Natural killer cell (primary cell): ENCODE measurements at regions of chr20 and their contacts with region 1.

Region 1: GRCh38 chr20:44217342-44218092 is 6.9 kb upstream of the OSER1 start:
- DNase-seq: peak; percentile 53 to 90
- ATAC-seq: peak; percentile 65 to 73 (median 70)
- H3K4me3 ChIP-seq: peak overlapping the region; percentile 2
- H3K4me3 Mint-ChIP-seq: peak overlapping the region; percentile 92
- H3K27ac ChIP-seq: peak overlapping the region; percentile 52
- H3K27ac Mint-ChIP-seq: peak overlapping the region; percentile 37 to 68
- H3K4me1 ChIP-seq: peaks cover 31% of the 10 kb centered on the region
- H3K4me1 Mint-ChIP-seq: peaks cover 49 to 54% of the 10 kb centered on the region in 2 donors
- H3K27me3 ChIP-seq: no peaks in the 10 kb centered on the region
- H3K27me3 Mint-ChIP-seq: no peaks in the 10 kb centered on the region
- CTCF ChIP-seq: peak; percentile 98

Region 2: GRCh38 chr20:44310664-44311639 is 93.4 kb after region 1 on chr20 and contains the start of gene FITM2:
- intact Hi-C with region 1: loop called (anchors 1 kb)
- DNase-seq: peak; percentile 98 to 99
- ATAC-seq: peak; percentile 95 to 97 (median 95)
- H3K4me3 ChIP-seq: peak within 1 kb of the TSS; percentile 96
- H3K4me3 Mint-ChIP-seq: peak within 1 kb of the TSS; percentile 97
- H3K27ac ChIP-seq: peak within 1 kb of the TSS; percentile 34
- H3K27ac Mint-ChIP-seq: peak within 1 kb of the TSS; percentile 86 to 95
- H3K4me1 ChIP-seq: peaks cover 18% of the 10 kb centered on the region
- H3K4me1 Mint-ChIP-seq: peaks cover 24 to 28% of the 10 kb centered on the region in 2 donors
- H3K27me3 ChIP-seq: no peaks in the 10 kb centered on the region
- H3K27me3 Mint-ChIP-seq: no peaks in the 10 kb centered on the region
- CTCF ChIP-seq: peak; percentile 90
- total RNA-seq, gene FITM2: 3.7 to 6.0 (median 3.9) TPM

Region 3: DNA sequence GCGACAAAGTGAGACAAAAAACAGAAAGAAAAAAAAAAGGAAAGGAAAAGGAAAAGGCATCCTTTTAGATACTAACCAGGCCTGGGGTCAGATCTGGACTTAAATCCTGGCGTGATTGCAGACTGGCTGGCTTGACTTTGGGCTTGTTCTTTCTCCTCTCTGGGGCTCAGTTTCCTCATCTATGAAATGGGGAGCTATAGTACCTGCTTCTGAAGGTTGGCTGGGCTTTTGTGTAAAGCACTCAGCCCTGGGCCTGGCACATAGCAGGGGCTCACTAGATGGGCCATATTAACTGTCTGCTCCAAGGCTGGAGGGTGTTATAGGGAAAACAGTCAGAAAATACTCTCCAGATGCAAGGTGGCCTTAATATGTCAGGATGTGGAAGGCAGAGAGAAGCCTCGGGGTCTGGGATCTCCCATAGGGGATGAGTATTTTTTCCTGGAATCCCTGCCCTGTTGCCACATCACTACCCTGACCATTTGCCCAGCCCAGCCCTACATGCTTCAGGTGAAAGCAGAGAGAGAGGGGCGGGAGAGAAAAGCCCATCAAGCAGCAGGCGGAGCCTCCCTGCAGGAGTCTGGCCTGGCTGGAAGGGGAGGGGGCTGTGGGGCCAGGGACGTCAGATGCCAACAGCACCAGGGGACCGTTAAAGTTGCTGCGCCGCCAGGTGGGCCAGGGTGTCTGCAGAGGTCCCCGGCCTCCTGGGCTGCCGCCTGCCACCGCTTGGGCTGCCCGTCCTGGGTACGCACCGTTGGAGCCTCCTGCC is 118.3 kb after region 1 on chr20:
- intact Hi-C with region 1: no loop called
- DNase-seq: no peak
- ATAC-seq: no peak
- H3K4me3 ChIP-seq: no peak overlapping the region
- H3K4me3 Mint-ChIP-seq: no peak overlapping the region
- H3K27ac ChIP-seq: no peak overlapping the region
- H3K27ac Mint-ChIP-seq: no peak overlapping the region
- H3K4me1 ChIP-seq: no peaks in the 10 kb centered on the region
- H3K4me1 Mint-ChIP-seq: no peaks in the 10 kb centered on the region
- H3K27me3 ChIP-seq: no peaks in the 10 kb centered on the region
- H3K27me3 Mint-ChIP-seq: peaks cover 13 to 17% of the 10 kb centered on the region in 2 donors
- CTCF ChIP-seq: no peak

Region 4: GRCh38 chr20:44388466-44389023 is 171.0 kb after region 1 on chr20:
- intact Hi-C with region 1: loop called (anchors 5 kb)
- DNase-seq: peak; percentile 61 to 79
- ATAC-seq: peak; percentile 73 to 90 (median 86)
- H3K4me3 ChIP-seq: no peak overlapping the region
- H3K4me3 Mint-ChIP-seq: no peak overlapping the region
- H3K27ac ChIP-seq: no peak overlapping the region
- H3K27ac Mint-ChIP-seq: no peak overlapping the region
- H3K4me1 ChIP-seq: peaks cover 6% of the 10 kb centered on the region
- H3K4me1 Mint-ChIP-seq: peaks cover 11 to 24% of the 10 kb centered on the region in 2 donors
- H3K27me3 ChIP-seq: peaks cover 3% of the 10 kb centered on the region
- H3K27me3 Mint-ChIP-seq: peaks cover 7 to 10% of the 10 kb centered on the region in 2 donors
- CTCF ChIP-seq: peak; percentile 72

Region 5: GRCh38 chr20:44738813-44739477 is 521.4 kb after region 1 on chr20:
- intact Hi-C with region 1: loop called (anchors 5 kb)
- DNase-seq: peak in 1 of 2 donors; percentile 74
- ATAC-seq: peak in 2 of 3 donors; percentile 63
- H3K4me3 ChIP-seq: no peak overlapping the region
- H3K4me3 Mint-ChIP-seq: no peak overlapping the region
- H3K27ac ChIP-seq: no peak overlapping the region
- H3K27ac Mint-ChIP-seq: no peak overlapping the region
- H3K4me1 ChIP-seq: peaks cover 4% of the 10 kb centered on the region
- H3K4me1 Mint-ChIP-seq: peaks cover 12 to 16% of the 10 kb centered on the region in 2 donors
- H3K27me3 ChIP-seq: no peaks in the 10 kb centered on the region
- H3K27me3 Mint-ChIP-seq: peaks cover 16 to 18% of the 10 kb centered on the region in 2 donors
- CTCF ChIP-seq: no peak